ENCODE measurements at regions of chr6 and their contacts with region 1.

Region 1: GRCh38 chr6:25070547-25071366 is 135.0 kb upstream of the RIPOR2 start:
- DNase-seq: peak; percentile 92
- ATAC-seq: peak; percentile 99
- H3K4me3 Mint-ChIP-seq: peak overlapping the region; percentile 68
- H3K27ac Mint-ChIP-seq: peak overlapping the region; percentile 94
- H3K4me1 Mint-ChIP-seq: peaks cover 6% of the 10 kb centered on the region
- H3K27me3 Mint-ChIP-seq: no peaks in the 10 kb centered on the region
- CTCF ChIP-seq: peak; percentile 87

Region 2: GRCh38 chr6:24766680-24767462 is 303.9 kb before region 1 on chr6:
- CTCF ChIA-PET with region 1: no interaction called
- POLR2A ChIA-PET with region 1: no interaction called
- intact Hi-C with region 1: no loop called
- DNase-seq: no peak
- ATAC-seq: peak; percentile 76
- H3K4me3 Mint-ChIP-seq: no peak overlapping the region
- H3K27ac Mint-ChIP-seq: no peak overlapping the region
- H3K4me1 Mint-ChIP-seq: peaks cover 4% of the 10 kb centered on the region
- H3K27me3 Mint-ChIP-seq: no peaks in the 10 kb centered on the region
- CTCF ChIP-seq: peak; percentile 58

Region 3: GRCh38 chr6:24876499-24877465 is 194.0 kb before region 1 on chr6:
- CTCF ChIA-PET with region 1: no interaction called
- POLR2A ChIA-PET with region 1: no interaction called
- intact Hi-C with region 1: no loop called
- DNase-seq: no peak
- ATAC-seq: no peak
- H3K4me3 Mint-ChIP-seq: no peak overlapping the region
- H3K27ac Mint-ChIP-seq: peak overlapping the region; percentile 71
- H3K4me1 Mint-ChIP-seq: peaks cover 60% of the 10 kb centered on the region
- H3K27me3 Mint-ChIP-seq: no peaks in the 10 kb centered on the region
- CTCF ChIP-seq: no peak

Region 4: DNA sequence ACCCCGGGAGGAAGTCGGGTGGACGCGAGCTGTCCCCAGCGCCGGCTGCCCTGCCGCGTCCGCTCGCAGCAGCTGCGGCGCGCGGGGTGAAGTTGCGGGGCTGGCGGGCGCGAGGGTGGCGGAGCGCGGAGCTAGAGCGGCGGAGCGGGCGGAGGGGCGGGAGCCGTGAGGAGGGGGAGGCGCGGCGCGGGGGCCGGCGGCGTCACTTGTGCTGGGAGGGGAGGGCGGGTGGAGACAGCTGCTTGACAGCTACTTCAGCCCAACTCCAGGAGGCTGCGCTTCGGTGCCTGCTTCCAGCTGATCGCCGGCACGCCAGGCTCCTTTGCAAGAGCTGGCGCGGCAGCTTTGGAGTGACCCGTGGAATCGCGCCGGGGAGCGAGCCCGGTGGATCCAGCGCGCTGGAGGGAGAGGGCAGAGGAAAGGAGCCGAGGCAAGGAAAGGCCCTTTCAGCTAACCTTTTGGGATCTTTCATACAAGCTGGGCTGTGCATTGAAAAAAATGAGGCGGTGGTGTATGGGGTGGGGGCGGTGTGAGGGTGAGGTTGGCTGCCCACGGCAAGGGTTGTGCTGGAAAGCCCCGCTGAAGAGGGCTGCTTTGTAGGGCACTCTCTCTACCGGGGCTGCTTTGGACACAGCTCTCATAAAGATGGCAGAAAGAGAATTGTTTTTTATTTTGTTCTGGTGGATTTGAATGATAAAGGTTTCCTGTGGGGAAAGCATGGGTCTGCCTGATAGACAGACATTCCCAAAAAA is 159.6 kb before region 1 on chr6:
- CTCF ChIA-PET with region 1: interaction called, 12 read pairs
- POLR2A ChIA-PET with region 1: no interaction called
- intact Hi-C with region 1: no loop called
- DNase-seq: peak; percentile 64
- ATAC-seq: peak; percentile 18
- H3K4me3 Mint-ChIP-seq: peak overlapping the region; percentile 97
- H3K27ac Mint-ChIP-seq: peak overlapping the region; percentile 96
- H3K4me1 Mint-ChIP-seq: peaks cover 73% of the 10 kb centered on the region
- H3K27me3 Mint-ChIP-seq: no peaks in the 10 kb centered on the region
- CTCF ChIP-seq: no peak

Region 5: DNA sequence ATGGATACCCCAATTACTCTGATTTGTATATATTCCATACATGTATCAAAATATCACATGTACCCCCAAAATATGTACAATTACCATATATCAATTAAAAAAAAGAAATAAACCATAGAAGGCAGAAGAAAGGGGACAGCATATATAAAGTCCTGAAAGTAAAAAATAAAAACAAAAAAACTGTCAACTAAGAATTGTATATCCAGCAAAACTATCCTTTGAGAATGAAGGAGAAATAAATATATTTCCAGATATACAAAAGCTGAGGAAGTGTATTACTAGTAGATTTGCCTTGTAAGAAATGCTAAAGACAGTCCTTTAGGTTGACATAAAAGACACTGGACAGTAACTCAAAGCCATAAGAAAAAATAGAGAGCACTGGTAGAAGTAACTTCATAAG is 125.7 kb before region 1 on chr6:
- CTCF ChIA-PET with region 1: no interaction called
- POLR2A ChIA-PET with region 1: no interaction called
- intact Hi-C with region 1: no loop called
- DNase-seq: no peak
- ATAC-seq: no peak
- H3K4me3 Mint-ChIP-seq: no peak overlapping the region
- H3K27ac Mint-ChIP-seq: no peak overlapping the region
- H3K4me1 Mint-ChIP-seq: peaks cover 58% of the 10 kb centered on the region
- H3K27me3 Mint-ChIP-seq: no peaks in the 10 kb centered on the region
- CTCF ChIP-seq: no peak

Region 6: DNA sequence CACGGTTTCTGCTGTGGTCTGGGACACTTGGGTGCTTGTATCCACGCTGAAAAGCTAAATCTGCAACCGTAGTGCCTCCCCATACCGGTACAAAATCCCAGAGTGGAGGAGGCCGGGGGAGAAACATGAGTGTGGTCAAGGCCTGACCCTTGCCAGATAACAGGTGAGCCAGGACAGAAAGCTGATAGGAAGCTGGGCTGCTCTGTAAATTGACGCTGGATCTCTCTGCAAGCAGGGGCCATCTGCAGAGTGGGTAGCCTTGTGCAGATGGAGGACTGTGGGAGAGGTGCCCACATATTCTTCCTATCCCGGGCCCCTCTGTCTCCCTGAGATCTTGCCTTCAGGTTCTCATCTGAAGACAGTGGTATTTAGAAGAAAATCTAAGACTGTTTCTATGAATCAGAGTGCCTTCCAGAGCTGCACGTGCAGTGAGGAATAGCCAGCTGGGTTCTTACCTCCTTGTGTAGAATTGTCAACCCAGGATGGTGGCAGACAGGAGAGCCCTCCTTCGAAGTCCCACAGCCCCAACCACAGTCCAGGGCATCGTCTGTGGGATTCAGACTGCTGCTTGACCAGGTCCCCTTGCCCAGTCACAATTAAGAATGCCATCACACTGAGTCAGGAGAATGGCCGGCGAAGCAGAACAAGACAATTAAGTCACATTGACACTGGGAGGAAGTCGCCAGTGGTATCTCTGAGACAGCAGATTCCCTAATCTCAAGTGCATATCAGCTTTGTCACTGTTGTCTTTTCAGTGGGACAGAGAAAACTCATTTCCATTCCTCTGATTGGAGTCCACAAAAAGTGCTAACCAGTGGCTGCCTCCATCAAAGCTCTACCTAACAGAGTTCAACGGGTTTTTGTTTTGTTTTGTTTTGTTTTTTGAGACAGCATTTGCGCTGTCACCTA is 35.0 kb before region 1 on chr6:
- CTCF ChIA-PET with region 1: interaction called, 16 read pairs
- POLR2A ChIA-PET with region 1: no interaction called
- intact Hi-C with region 1: no loop called
- DNase-seq: peak; percentile 34
- ATAC-seq: peak; percentile 45
- H3K4me3 Mint-ChIP-seq: peak overlapping the region; percentile 77
- H3K27ac Mint-ChIP-seq: peak overlapping the region; percentile 84
- H3K4me1 Mint-ChIP-seq: peaks cover 55% of the 10 kb centered on the region
- H3K27me3 Mint-ChIP-seq: no peaks in the 10 kb centered on the region
- CTCF ChIP-seq: no peak

Region 7: GRCh38 chr6:25053875-25054371 is 16.8 kb before region 1 on chr6:
- CTCF ChIA-PET with region 1: interaction called, 12 read pairs
- POLR2A ChIA-PET with region 1: interaction called, 4 read pairs
- intact Hi-C with region 1: no loop called
- DNase-seq: peak; percentile 44
- ATAC-seq: peak; percentile 41
- H3K4me3 Mint-ChIP-seq: no peak overlapping the region
- H3K27ac Mint-ChIP-seq: peak overlapping the region; percentile 66
- H3K4me1 Mint-ChIP-seq: peaks cover 77% of the 10 kb centered on the region
- H3K27me3 Mint-ChIP-seq: no peaks in the 10 kb centered on the region
- CTCF ChIP-seq: no peak

Region 8: GRCh38 chr6:25100288-25100687 is 29.5 kb after region 1 on chr6:
- CTCF ChIA-PET with region 1: no interaction called
- POLR2A ChIA-PET with region 1: no interaction called
- intact Hi-C with region 1: no loop called
- DNase-seq: no peak
- ATAC-seq: no peak
- H3K4me3 Mint-ChIP-seq: no peak overlapping the region
- H3K27ac Mint-ChIP-seq: no peak overlapping the region
- H3K4me1 Mint-ChIP-seq: peaks cover 2% of the 10 kb centered on the region
- H3K27me3 Mint-ChIP-seq: no peaks in the 10 kb centered on the region
- CTCF ChIP-seq: no peak